Endothelial cell of umbilical vein (primary cell): ENCODE measurements at regions of chr17 and their contacts with region 1.

Region 1: DNA sequence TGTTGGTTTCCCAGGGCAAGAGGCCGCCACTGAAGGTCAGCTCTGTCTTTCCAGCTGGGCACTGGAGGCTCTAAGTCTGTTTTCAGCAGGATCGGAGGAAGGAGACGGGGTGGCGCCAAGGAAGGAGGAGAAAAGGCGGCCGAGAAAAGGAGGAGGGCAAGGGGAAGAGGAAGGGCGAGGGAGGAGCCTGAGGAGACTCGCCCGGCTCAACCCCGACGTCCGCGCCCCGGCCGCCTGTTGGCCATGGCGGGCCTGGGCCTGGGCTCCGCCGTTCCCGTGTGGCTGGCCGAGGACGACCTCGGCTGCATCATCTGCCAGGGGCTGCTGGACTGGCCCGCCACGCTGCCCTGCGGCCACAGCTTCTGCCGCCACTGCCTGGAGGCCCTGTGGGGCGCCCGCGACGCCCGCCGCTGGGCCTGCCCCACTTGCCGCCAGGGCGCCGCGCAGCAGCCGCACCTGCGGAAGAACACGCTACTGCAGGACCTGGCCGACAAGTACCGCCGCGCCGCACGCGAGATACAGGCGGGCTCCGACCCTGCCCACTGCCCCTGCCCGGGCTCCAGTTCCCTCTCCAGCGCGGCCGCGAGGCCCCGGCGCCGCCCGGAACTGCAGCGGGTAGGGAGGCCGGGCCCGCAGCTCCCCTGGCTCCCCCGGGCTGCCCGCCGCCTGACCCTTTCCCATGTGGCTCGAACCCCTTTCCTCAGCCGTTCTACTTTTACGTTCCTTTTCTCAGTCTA is at the start of gene RNF135:
- DNase-seq: peak; percentile 84
- H3K4me3 ChIP-seq: peak within 1 kb of the TSS; percentile 48 to 84 (median 72)
- H3K27ac ChIP-seq: peak within 1 kb of the TSS; percentile 76
- H3K4me1 ChIP-seq: peaks cover 10% of the 10 kb centered on the region
- H3K27me3 ChIP-seq: no peaks in the 10 kb centered on the region
- CTCF ChIP-seq: peak in 1 of 2 donors; percentile 13
- POLR2A ChIP-seq: peak; percentile 99
- total RNA-seq, gene RNF135: 11.6 and 11.7 TPM in 2 replicates

Region 2: DNA sequence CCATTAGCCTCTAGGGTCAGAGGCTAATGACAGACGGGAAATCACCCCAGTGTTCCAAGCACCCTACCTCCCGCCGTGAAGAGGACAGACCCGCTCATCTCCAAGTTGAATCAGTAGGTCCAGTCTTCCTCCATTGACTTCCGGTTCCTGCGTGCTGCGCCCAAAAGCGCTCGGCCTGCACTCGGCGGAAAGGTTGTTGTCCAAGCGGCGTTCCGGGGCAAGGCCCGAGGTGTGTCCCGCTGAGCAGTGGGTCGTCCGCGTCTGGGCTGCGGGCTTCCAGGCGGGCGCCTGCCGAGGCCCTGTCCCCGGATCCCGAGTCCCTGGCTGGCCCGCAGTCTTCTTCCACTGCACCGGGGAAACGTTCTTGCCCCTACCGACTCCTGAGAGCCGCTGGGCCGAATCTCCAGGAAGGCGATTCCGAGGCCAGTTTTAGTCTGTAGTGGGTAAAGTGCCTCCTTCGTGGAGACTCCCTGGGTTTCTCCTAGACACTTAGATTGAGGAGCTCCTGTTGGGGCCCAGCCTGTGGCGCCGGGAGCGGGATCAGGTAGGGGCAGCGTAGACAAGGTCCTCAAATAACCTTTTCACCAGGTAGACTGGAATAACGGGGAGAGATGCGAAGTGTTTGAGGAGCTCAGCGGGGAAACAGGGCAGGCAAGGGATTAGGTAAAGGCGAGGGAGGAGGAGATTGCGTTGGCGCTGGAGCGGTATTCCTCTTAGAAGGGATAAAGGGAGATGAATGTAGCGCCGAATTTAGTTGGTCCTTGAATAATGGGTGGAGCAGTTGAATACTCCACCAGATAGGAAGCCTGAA is 64.7 kb before region 1 on chr17 and contains the start of gene TEFM:
- CTCF ChIA-PET with region 1: interaction called, 3 read pairs
- POLR2A ChIA-PET with region 1: no interaction called
- dilution Hi-C with region 1: no loop called
- intact Hi-C with region 1: loop called (anchors 2 kb)
- DNase-seq: peak; percentile 92
- H3K4me3 ChIP-seq: peak within 1 kb of the TSS; percentile 22 to 85 (median 65)
- H3K27ac ChIP-seq: peak within 1 kb of the TSS; percentile 68
- H3K4me1 ChIP-seq: peaks cover 6% of the 10 kb centered on the region
- H3K27me3 ChIP-seq: no peaks in the 10 kb centered on the region
- CTCF ChIP-seq: no peak
- POLR2A ChIP-seq: peak; percentile 84
- total RNA-seq, gene TEFM: 12.0 and 12.7 TPM in 2 replicates

Region 3: DNA sequence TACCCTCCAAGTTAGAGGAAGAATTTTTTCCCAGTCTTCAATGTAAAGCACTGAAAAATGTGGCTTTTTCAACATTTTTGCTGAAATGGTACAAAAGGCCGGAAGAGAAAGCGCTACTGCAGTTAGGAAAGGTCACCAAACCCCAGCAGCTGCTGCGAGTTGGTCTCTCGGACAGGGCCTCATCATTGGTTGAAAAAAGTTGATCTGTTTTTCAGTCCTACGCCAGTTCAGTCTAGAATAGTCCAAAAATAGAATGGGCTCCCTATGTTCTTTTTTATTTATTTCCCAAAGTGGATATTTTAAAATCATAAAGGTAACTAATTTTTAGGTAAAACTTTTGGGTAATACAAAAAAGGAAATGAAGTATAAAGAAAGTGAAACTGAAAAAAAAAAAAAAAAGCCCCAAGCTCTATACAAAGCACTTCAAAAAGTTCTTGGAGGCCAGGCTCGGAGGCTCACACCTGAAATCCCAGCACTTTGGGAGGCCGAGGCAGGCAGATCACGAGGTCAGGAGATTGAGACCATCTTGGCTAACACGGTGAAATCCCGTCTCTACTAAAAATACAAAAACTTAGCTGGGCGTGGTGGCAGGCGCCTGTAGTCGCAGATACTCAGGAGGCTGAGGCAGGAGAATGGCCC is 31.8 kb before region 1 on chr17:
- CTCF ChIA-PET with region 1: no interaction called
- POLR2A ChIA-PET with region 1: no interaction called
- dilution Hi-C with region 1: no loop called
- intact Hi-C with region 1: no loop called
- DNase-seq: no peak
- H3K4me3 ChIP-seq: no peak overlapping the region
- H3K27ac ChIP-seq: no peak overlapping the region
- H3K4me1 ChIP-seq: no peaks in the 10 kb centered on the region
- H3K27me3 ChIP-seq: peaks cover 0 to 10% of the 10 kb centered on the region in 2 experiments
- CTCF ChIP-seq: no peak
- POLR2A ChIP-seq: no peak

Region 4: DNA sequence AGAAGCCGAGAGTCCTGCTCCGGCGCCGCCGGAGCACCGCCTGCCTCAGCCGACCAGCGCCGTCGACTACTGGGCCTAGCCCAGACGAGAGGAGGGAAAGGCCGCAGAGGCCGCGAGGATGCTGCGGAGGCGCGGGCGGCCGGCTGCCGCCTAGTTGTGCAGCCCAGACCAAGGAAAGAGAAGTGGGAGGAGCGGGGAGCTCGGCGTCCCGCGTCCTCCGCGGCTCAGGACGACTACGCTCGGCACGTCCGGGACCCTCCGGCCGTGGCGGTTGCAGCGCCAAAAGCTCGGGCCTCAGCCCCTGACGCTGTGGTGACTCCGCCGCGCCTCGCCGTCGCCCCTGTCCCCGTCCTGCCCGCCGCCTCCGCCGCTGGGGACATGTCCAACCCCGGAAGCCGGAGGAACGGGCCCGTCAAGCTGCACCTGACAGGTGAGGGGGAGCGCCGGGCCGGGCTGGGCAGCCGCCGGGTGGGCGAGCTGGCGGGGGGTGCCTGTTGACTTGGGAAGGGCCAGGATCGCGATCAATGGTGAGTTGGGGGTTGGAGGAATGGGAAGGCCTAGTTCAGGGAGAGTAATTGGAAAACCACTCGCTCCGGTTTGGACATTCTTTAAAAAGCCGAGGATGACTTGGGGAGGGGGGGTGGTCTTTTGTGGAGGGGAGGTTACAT is 37.5 kb after region 1 on chr17:
- CTCF ChIA-PET with region 1: no interaction called
- POLR2A ChIA-PET with region 1: no interaction called
- dilution Hi-C with region 1: no loop called
- intact Hi-C with region 1: loop called (anchors 1 kb)
- DNase-seq: peak; percentile 61
- H3K4me3 ChIP-seq: peak overlapping the region; percentile 22 to 58 (median 45)
- H3K27ac ChIP-seq: no peak overlapping the region
- H3K4me1 ChIP-seq: peaks cover 15% of the 10 kb centered on the region
- H3K27me3 ChIP-seq: no peaks in the 10 kb centered on the region
- CTCF ChIP-seq: no peak
- POLR2A ChIP-seq: no peak